ENCODE measurements at regions of chr6 and their contacts with region 1.

Region 1: DNA sequence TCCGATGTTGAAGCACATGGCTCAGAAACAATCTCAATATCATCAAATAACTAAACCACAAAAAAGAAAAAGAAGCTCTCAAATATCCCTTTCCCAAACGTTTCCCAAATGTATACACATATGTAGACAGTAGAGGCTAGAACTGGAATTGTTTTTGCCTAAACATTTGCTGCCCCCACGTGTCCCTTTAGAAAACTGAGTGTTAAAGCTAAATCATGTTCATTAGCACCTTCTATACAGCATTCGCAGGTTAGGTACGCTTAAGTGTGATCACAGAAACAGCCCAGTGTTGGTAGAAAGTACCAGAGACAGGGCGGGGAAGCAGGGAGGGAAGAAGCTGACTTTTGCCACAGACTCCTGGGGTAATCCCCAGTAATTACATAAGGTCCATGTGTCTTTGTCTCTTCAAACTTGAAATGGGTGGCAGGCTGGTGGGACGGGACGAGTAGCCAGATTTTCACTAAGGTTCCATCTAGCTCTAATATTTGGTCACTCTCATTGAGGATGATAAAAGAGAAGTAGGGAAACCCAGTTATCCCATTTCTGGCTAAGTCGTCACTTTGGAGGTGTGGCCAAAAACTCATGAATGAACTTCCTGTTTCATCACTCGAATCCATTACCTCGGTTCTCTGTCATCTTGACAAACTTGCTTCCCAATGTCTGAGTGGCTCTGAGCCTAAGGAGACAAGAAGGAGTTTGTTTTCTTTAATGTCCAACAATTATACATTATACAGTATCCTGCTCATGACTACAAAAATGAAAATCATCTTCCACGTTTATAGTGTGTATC is 15.0 kb upstream of the TFAP2A start:
- H3K4me3 ChIP-seq: no peak overlapping the region
- H3K27ac ChIP-seq: no peak overlapping the region
- H3K4me1 ChIP-seq: no peaks in the 10 kb centered on the region
- CTCF ChIP-seq: peak; percentile 71

Region 2: GRCh38 chr6:8707956-8708772 is 1721.7 kb before region 1 on chr6:
- CTCF ChIA-PET with region 1: interaction called, 14 read pairs
- POLR2A ChIA-PET with region 1: no interaction called
- H3K4me3 ChIP-seq: peak overlapping the region; percentile 13; the same call in 1 of the 2 replicates
- H3K27ac ChIP-seq: no peak overlapping the region
- H3K4me1 ChIP-seq: peaks cover 6% of the 10 kb centered on the region; the same call in 1 of the 2 replicates
- CTCF ChIP-seq: peak; percentile 53; the same call in 1 of the 2 replicates

Region 3: DNA sequence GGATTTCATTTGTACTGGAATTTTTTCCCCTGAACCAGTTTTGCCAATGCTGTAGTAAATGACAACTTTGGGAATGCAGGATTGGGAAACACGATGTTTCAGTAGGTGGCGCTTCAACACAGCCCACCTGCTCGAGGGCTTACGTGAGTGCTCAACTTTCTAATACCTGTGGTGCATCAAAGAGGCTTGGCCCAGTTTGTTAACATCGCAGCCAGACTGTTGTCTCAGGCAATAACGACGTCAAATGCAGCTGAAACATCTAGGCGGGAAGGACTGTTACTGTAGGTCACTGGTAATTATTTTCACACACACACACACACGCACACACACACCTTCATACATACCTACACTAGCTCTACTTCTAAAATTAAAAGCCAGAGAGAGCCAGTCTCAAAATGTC is 1179.0 kb before region 1 on chr6:
- CTCF ChIA-PET with region 1: interaction called, 31 read pairs
- POLR2A ChIA-PET with region 1: no interaction called
- H3K4me3 ChIP-seq: no peak overlapping the region
- H3K27ac ChIP-seq: no peak overlapping the region
- H3K4me1 ChIP-seq: peaks cover 10% of the 10 kb centered on the region
- CTCF ChIP-seq: 0 out of 2 replicates have a peak, but pooled peaks have one; percentile 11

Region 4: GRCh38 chr6:10381133-10381829 is 48.6 kb before region 1 on chr6:
- CTCF ChIA-PET with region 1: no interaction called
- POLR2A ChIA-PET with region 1: no interaction called
- H3K4me3 ChIP-seq: no peak overlapping the region
- H3K27ac ChIP-seq: no peak overlapping the region
- H3K4me1 ChIP-seq: no peaks in the 10 kb centered on the region
- CTCF ChIP-seq: no peak

Region 5: DNA sequence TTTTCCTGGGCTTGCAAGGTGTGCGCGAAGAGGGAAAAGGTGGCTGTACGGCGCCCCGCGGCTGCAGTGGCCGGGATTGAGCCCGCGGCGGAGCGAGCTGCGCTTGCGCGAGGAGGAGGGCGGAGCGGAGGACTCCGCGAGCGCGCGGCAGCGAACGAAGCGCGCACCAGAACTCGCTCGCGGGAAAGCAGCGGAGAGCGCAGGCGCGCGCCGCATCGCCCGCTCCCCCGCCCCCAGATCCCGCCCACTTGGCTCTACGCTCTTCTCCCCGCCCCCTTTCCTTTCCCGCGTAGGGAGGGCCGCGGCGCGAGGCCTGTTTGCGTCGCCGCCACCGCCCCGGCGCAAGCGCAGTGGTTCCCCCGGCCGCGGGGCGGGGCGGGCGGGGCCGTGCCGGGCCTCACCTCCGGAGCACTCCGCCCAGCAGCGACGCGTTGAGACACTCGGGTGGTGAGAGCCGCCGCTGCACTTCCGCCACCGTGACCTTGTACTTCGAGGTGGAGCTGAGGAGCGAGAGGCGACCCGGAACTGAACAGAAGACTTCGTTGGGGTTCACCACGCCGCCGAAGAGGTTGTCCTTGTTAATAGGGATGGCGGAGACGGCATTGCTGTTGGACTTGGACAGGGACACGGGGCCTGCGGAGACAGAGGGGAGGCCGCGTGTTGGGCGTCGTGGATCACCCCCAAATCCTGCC is 25.6 kb before region 1 on chr6:
- CTCF ChIA-PET with region 1: interaction called, 13 read pairs
- POLR2A ChIA-PET with region 1: interaction called, 8 read pairs
- H3K4me3 ChIP-seq: peak overlapping the region; percentile 60
- H3K27ac ChIP-seq: peak overlapping the region; percentile 91
- H3K4me1 ChIP-seq: peaks cover 38% of the 10 kb centered on the region
- CTCF ChIP-seq: peak; percentile 65

Region 6: GRCh38 chr6:10418928-10419748 is 10.7 kb before region 1 on chr6:
- CTCF ChIA-PET with region 1: interaction called, 42 read pairs
- POLR2A ChIA-PET with region 1: interaction called, 112 read pairs
- H3K4me3 ChIP-seq: peak overlapping the region; percentile 54
- H3K27ac ChIP-seq: peak overlapping the region; percentile 79
- H3K4me1 ChIP-seq: peaks cover 16% of the 10 kb centered on the region
- CTCF ChIP-seq: no peak

Measured in HEK293 (cell line).